Esophagus muscularis mucosa (tissue), 4 donors: ENCODE measurements at regions of chr12 and their contacts with region 1.

Region 1: GRCh38 chr12:104201238-104202001 is 14.2 kb upstream of the TXNRD1 start:
- DNase-seq: no peak
- H3K4me3 ChIP-seq: no peak overlapping the region
- H3K27ac ChIP-seq: no peak overlapping the region
- H3K4me1 ChIP-seq: peaks cover 0 to 16% (median 10%) of the 10 kb centered on the region in 4 donors
- H3K27me3 ChIP-seq: no peaks in the 10 kb centered on the region
- CTCF ChIP-seq: peak; percentile 71 to 88 (median 88)
- EP300 ChIP-seq: no peak
- POLR2A ChIP-seq: no peak

Region 2: DNA sequence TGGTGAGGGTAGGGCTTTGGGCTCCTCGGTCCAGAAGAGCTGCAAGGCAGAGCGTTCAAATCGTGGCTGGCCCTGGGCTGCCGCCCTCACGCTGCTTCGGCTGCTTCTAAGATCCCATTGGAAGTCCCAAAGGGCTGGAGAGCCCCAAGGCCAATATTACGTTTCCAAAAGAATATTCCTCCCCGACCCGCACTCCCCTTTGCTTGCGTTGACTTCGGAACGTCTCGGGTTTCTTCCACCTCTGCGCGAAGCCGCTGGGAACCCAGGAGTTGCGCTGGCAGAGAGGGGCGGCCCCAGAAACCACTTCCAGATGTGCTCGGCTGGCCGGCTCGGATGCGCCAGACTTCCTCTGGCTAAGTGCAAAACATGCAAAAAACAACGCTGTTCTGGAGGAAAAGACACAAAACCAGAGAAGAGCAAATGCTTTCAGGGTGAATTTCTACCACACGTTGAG is 151.5 kb before region 1 on chr12 and contains the start of gene GLT8D2:
- intact Hi-C with region 1: no loop called
- DNase-seq: no peak
- H3K4me3 ChIP-seq: peak within 1 kb of the TSS; percentile 50 to 72 (median 56)
- H3K27ac ChIP-seq: peak within 1 kb of the TSS; percentile 64 to 84 (median 75)
- H3K4me1 ChIP-seq: peaks cover 30 to 58% (median 51%) of the 10 kb centered on the region in 4 donors
- H3K27me3 ChIP-seq: no peaks in the 10 kb centered on the region
- CTCF ChIP-seq: no peak
- EP300 ChIP-seq: no peak
- POLR2A ChIP-seq: no peak
- total RNA-seq, gene GLT8D2: 7.1 to 13.6 (median 11.0) TPM

Region 3: DNA sequence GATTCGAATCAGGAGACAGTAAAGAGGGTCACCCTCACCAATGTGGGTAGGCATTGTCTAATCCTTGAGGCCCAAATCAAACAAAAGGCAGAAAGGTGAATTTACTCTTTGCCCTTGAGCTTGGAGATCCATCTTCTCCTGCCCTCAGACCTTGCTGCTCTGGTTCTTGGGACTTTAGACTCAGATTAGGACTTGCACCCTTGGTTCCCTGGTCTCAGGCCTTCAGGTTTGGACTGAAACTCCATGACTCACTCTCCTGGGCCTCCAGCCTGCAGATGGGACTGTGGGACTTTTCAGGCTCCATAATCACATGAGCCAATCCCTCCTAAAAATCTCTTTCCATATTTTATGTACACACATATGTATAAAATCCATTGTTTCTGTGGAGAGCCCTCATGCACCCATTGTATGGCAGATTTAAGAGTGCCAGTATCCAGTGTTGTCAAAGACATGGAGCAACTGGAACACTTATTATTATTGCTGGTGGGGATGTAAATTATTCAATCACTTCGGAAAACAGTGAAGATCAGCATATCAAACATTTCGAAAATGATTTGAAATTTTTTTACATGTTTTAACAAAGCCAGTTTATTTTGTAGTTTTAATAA is 150.8 kb after region 1 on chr12:
- intact Hi-C with region 1: loop called (anchors 2 kb)
- DNase-seq: no peak
- H3K4me3 ChIP-seq: no peak overlapping the region
- H3K27ac ChIP-seq: no peak overlapping the region
- H3K4me1 ChIP-seq: no peaks in the 10 kb centered on the region
- H3K27me3 ChIP-seq: no peaks in the 10 kb centered on the region
- CTCF ChIP-seq: no peak
- EP300 ChIP-seq: no peak
- POLR2A ChIP-seq: no peak

Region 4: GRCh38 chr12:104358347-104359003 is 157.1 kb after region 1 on chr12:
- intact Hi-C with region 1: loop called (anchors 2 kb)
- DNase-seq: peak; percentile 91
- H3K4me3 ChIP-seq: no peak overlapping the region
- H3K27ac ChIP-seq: no peak overlapping the region
- H3K4me1 ChIP-seq: no peaks in the 10 kb centered on the region
- H3K27me3 ChIP-seq: no peaks in the 10 kb centered on the region
- CTCF ChIP-seq: peak; percentile 80 to 90 (median 89)
- EP300 ChIP-seq: no peak
- POLR2A ChIP-seq: no peak

Region 5: DNA sequence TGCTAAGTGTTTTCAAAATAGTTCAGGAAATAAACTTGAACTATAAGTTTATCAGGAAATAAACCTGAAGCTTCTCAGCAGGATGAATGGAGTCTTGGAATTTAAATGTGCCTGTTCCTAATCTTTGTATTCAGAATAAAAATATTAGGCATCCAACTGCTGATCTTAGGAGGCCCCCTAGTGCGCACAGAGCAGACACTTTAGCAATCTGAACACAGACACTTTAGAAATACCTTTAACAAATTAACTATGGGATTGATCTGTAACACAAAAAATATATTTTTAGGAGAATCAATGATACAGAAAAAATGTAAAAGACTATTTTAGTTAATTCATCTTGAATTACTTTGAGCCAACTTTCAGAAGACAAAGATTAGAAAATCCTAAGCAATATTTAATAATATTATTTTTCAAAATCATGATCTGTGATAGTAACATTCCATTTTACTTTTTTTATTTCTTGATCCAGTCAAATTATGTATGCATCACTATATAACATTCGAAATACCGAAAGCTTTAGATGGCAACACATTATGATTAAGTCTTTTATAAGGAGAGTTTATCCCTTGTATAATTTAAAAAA is 675.8 kb after region 1 on chr12:
- intact Hi-C with region 1: loop called (anchors 5 kb)
- DNase-seq: no peak
- H3K4me3 ChIP-seq: no peak overlapping the region
- H3K27ac ChIP-seq: no peak overlapping the region
- H3K4me1 ChIP-seq: no peaks in the 10 kb centered on the region
- H3K27me3 ChIP-seq: no peaks in the 10 kb centered on the region
- CTCF ChIP-seq: peak; percentile 52 to 68 (median 63)
- EP300 ChIP-seq: no peak
- POLR2A ChIP-seq: no peak